Caco-2 (cell line): ENCODE measurements at regions of chr17 and their contacts with region 1.

Region 1: DNA sequence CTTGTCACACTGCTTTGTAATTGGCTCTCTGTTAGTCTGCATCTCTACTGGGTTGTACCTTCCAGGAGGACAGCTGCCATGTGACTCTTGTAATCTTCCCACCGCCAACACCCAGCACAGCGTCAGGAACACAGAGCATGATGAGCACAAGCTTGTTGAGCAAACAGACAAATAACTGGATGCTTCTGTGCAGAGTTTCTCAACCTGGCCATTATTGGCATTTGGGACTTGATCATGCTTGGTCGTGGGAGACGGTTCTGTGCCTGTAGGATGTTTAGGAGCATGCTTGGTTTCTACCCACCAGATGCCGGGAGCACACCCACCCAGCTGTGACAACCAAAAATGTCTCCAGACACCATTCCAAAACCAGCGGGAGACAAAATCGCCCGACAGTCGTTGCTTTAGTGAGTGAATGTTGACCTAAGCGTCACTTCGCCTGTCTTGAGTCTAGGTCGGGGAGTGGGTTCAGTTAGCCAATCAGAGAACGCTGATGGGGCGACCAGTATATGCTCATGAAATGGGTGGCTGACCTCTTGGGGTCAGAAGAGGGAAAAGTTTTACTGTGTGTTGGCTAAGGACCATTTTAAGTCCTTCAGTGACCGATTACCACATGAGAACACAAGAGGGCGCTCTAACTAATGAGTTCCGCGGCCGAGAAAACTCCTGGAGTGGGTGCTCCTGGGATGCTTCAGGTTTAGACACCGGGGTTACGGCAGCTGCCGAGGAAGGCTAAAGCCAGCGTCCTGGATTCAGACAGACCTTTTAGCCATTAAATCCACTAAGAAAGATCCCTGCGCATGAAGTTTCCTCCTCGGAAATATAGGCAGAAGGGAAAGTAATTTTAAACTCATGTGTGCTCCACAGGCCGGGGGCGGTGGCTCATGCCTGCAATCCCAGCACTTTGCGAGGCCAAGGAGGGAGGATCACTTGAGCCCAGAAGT is 57.8 kb upstream of the TEX2 start:
- DNase-seq: peak; percentile 65
- H3K4me3 ChIP-seq: no peak overlapping the region
- H3K4me3 Mint-ChIP-seq: no peak overlapping the region
- H3K27ac Mint-ChIP-seq: peak overlapping the region; percentile 87
- H3K4me1 ChIP-seq: peaks cover 58% of the 10 kb centered on the region
- H3K4me1 Mint-ChIP-seq: peaks cover 50% of the 10 kb centered on the region
- H3K27me3 ChIP-seq: no peaks in the 10 kb centered on the region
- H3K27me3 Mint-ChIP-seq: no peaks in the 10 kb centered on the region
- CTCF ChIP-seq: peak; percentile 44 to 80

Region 2: DNA sequence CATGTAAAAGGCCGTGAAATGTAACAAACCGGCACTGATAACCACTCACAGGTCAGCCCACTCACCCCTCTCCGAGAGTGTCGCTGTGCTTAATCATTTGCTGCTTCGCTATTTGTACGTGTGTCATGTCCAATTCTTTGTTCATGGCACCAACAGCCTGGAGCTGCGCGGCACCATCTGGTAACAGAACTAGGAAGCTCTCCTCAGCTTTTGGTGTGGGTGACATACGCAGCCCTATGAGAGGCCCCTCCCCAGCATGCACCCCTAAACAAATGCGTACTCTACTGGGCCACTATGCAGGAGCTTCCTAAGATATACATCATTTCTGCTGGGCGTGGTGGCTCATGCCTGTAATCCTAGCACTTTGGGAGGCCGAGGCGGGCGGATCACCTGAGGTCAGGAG is 72.1 kb after region 1 on chr17:
- CTCF ChIA-PET with region 1: no interaction called
- POLR2A ChIA-PET with region 1: no interaction called
- intact Hi-C with region 1: loop called (anchors 5 kb)
- DNase-seq: no peak
- H3K4me3 ChIP-seq: no peak overlapping the region
- H3K4me3 Mint-ChIP-seq: no peak overlapping the region
- H3K27ac Mint-ChIP-seq: peak overlapping the region; percentile 20
- H3K4me1 ChIP-seq: peaks cover 45% of the 10 kb centered on the region
- H3K4me1 Mint-ChIP-seq: peaks cover 10% of the 10 kb centered on the region
- H3K27me3 ChIP-seq: no peaks in the 10 kb centered on the region
- H3K27me3 Mint-ChIP-seq: no peaks in the 10 kb centered on the region
- CTCF ChIP-seq: no peak